ENCODE measurements at regions of chr14 and their contacts with region 1.

Region 1: GRCh38 chr14:75198291-75198933 is 22.0 kb upstream of the TMED10 start:
- DNase-seq: no peak
- H3K4me3 ChIP-seq: no peak overlapping the region
- H3K4me3 Mint-ChIP-seq: no peak overlapping the region
- H3K27ac Mint-ChIP-seq: no peak overlapping the region
- H3K4me1 ChIP-seq: peaks cover 32% of the 10 kb centered on the region
- H3K4me1 Mint-ChIP-seq: peaks cover 23% of the 10 kb centered on the region
- H3K27me3 ChIP-seq: no peaks in the 10 kb centered on the region
- H3K27me3 Mint-ChIP-seq: no peaks in the 10 kb centered on the region
- CTCF ChIP-seq: no peak

Region 2: GRCh38 chr14:75141967-75142366 is 56.4 kb before region 1 on chr14:
- CTCF ChIA-PET with region 1: no interaction called
- POLR2A ChIA-PET with region 1: no interaction called
- intact Hi-C with region 1: no loop called
- DNase-seq: peak in 1 of 2 experiments; percentile 39
- H3K4me3 ChIP-seq: no peak overlapping the region
- H3K4me3 Mint-ChIP-seq: no peak overlapping the region
- H3K27ac Mint-ChIP-seq: no peak overlapping the region
- H3K4me1 ChIP-seq: no peaks in the 10 kb centered on the region
- H3K4me1 Mint-ChIP-seq: peaks cover 7% of the 10 kb centered on the region
- H3K27me3 ChIP-seq: no peaks in the 10 kb centered on the region
- H3K27me3 Mint-ChIP-seq: no peaks in the 10 kb centered on the region
- CTCF ChIP-seq: peak in 1 of 2 experiments; percentile 14

Region 3: DNA sequence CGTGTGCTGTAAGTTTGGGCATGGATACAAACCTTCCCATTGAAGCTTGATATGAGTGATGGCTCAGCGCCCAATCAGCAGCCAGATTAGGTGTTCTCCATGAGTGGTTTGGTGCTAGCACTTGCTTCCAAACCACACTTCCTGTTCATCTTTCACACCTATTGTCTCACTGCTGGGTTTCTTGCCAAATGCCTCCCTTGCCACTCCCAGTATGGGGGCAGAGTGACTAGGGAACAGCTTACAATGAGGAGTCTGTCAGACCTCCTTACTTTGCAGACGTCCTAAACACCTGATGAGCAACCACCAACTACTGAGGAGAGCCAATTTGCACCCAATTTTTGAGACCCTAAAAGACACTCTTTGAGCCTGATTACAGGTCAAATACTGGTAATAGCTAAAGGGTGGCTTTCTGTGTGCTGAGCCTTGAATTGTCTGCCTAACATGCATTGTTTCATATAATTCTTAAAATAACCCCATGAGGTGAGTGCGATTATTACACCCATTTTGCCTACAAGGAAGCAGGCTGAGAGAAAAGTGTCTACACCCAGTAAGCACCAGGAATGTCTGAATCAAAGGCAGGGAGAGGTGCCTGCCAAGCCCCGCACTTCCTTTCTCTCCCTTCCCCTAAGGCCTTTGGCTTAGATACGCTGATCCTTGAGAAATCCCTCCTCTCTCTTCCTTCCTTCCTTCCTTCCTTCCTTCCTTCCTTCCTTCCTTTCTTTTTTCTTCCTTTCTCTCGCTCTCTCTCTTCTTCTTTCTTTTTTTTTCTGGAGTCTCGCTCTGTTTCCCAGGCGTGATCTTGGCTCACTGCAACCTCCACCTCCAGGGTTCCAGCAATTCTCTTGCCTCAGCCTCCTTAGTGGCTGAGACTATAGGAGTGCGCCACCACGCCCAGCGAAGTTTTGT is 32.0 kb after region 1 on chr14:
- CTCF ChIA-PET with region 1: no interaction called
- POLR2A ChIA-PET with region 1: no interaction called
- intact Hi-C with region 1: loop called (anchors 5 kb)
- DNase-seq: no peak
- H3K4me3 ChIP-seq: no peak overlapping the region
- H3K4me3 Mint-ChIP-seq: no peak overlapping the region
- H3K27ac Mint-ChIP-seq: peak overlapping the region; percentile 9
- H3K4me1 ChIP-seq: peaks cover 33% of the 10 kb centered on the region
- H3K4me1 Mint-ChIP-seq: peaks cover 36% of the 10 kb centered on the region
- H3K27me3 ChIP-seq: no peaks in the 10 kb centered on the region
- H3K27me3 Mint-ChIP-seq: no peaks in the 10 kb centered on the region
- CTCF ChIP-seq: peak in 1 of 2 experiments; percentile 22

Measured in Caco-2 (cell line).